Tibial artery (tissue), 4 donors: ENCODE measurements at regions of chr20 and their contacts with region 1.

Region 1: GRCh38 chr20:297098-297924 is at the start of gene ZCCHC3:
- DNase-seq: peak; percentile 83 to 95
- H3K4me3 ChIP-seq: peak within 1 kb of the TSS; percentile 88 to 92
- H3K27ac ChIP-seq: peak within 1 kb of the TSS; percentile 97 to 100
- H3K4me1 ChIP-seq: peaks cover 0 to 40% (median 30%) of the 10 kb centered on the region in 4 donors
- H3K27me3 ChIP-seq: no peaks in the 10 kb centered on the region
- CTCF ChIP-seq: peak; percentile 8 to 21

Region 2: DNA sequence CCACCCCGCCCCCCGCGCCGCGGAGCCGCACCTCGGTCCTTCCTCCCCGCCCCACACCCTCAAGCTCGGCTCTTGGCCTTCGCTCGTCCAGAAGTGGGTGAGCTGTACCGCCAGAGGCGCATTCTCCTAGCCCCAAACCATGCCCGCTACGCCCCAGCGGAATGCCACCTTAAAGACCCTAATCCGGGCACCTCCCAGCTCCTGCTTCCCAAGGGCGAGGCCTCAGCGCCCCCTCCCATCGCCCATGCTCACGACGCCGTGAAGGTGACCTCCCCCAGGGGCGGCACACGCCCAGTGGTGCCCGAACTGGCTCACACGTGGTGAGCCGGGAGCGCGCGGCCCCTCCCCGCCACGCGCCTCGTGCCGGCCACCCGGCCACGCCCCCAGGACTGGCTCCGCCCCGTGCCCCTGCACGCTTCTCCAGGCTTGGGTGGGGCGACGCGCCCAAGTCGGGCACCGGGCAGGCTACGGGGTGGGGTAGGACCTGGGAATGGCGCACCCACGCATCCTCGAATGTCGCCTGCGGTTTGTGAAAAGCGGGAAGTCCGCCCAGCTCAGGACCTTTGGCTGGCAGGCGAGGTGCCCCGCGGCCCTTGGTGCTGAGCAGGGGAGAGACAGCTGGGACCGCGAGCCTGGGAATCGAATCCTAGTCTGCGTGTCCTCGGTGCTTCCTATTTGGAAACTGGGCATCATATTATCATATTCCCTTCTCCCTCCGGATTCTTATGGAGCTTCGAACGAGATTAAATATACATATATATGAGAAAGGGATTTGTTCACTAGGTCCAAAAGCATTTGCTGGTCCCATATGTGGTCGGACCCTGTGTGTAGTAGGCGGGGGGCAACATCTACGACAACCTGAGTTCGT is 27.1 kb after region 1 on chr20:
- intact Hi-C with region 1: loop called (anchors 2 kb)
- DNase-seq: peak; percentile 89 to 96
- H3K4me3 ChIP-seq: peak overlapping the region; percentile 73 to 92
- H3K27ac ChIP-seq: peak overlapping the region; percentile 95 to 96
- H3K4me1 ChIP-seq: peaks cover 0 to 31% (median 20%) of the 10 kb centered on the region in 4 donors
- H3K27me3 ChIP-seq: no peaks in the 10 kb centered on the region
- CTCF ChIP-seq: peak; percentile 40 to 44